ENCODE measurements at regions of chr10 and their contacts with region 1.

Region 1: DNA sequence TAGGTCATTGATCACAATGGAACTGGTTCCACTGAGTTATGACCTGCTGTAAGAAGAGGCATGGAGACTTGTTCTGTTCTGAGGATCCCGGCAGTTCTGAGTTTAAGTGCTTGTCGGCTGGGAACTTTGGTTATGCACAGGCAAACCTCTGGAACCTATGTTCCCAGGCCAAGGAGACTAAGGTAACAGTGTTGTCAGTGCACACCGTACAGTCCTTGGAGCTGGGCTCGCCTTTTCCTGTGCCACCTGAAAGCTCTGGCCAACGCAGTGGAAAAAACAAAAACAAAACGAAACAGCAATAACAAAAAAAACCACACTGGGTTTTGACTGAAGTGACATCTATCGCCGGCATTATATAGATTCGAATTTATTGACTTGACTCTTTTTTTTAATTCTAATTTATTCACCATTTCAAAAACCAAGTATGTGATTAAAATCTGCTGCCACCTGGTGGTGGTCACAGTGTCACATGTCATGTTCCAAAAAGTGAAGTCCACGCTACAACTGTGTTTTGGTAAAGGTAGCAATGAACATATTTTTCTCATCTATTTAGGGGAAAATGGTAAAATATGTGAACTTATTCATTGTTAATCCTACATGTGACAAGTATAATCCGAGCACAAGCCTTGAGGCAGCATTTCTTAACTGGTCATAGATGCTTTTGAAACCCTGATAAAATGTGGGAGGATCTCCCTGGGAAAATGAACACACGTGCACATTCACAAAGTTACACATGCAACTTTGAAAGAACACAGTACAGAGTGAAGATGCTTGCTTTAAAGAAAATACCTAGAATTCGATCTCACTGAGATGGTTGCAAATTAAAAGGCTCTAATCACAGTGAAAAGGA is 113.8 kb upstream of the PPP2R2D start:
- DNase-seq: peak; percentile 31
- H3K4me3 ChIP-seq: no peak overlapping the region
- H3K27ac ChIP-seq: no peak overlapping the region
- H3K4me1 ChIP-seq: no peaks in the 10 kb centered on the region
- H3K27me3 ChIP-seq: no peaks in the 10 kb centered on the region
- CTCF ChIP-seq: peak; percentile 62

Region 2: DNA sequence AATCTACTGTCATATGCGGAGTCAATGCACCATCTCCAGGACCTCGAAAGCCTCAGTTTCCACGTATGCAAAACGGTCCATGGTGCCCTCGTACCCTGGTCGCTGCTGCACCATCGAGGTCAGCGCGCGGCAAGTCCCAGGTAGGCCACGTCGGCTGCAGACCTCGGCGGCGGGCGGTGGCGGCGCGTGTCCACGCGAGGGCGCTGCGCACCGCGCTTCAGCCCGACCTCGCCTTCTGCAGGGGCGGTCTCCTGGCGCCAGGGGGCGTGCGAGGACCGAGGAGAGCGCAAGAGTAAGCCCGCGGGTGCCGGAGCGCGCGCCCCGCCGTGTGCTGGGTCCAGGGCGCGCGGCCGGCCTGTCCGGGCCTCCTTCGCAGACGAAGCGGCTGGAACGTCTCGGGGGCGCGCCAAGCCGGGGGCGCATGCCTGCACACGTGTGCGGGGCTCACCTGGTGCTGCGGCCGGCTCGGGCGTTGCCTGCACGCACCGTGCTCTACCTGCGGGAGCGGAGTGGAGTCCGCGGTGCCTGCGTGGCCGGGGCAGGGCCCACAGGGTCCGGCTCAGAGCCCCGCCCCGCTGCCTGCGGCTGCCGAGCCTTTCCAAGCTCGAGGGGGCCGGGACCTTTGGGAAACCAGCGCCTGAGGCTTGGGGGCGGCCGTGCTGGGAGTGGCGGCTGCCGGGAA is 1596.8 kb before region 1 on chr10:
- intact Hi-C with region 1: loop called (anchors 5 kb)
- DNase-seq: peak; percentile 92
- H3K4me3 ChIP-seq: peak overlapping the region; percentile 63
- H3K27ac ChIP-seq: no peak overlapping the region
- H3K4me1 ChIP-seq: no peaks in the 10 kb centered on the region
- H3K27me3 ChIP-seq: no peaks in the 10 kb centered on the region
- CTCF ChIP-seq: peak; percentile 100

Region 3: GRCh38 chr10:131453594-131454355 is 333.2 kb before region 1 on chr10:
- intact Hi-C with region 1: loop called (anchors 5 kb)
- DNase-seq: peak; percentile 68
- H3K4me3 ChIP-seq: no peak overlapping the region
- H3K27ac ChIP-seq: no peak overlapping the region
- H3K4me1 ChIP-seq: no peaks in the 10 kb centered on the region
- H3K27me3 ChIP-seq: no peaks in the 10 kb centered on the region
- CTCF ChIP-seq: peak; percentile 81

Region 4: GRCh38 chr10:131496351-131497052 is 290.5 kb before region 1 on chr10:
- intact Hi-C with region 1: no loop called
- DNase-seq: no peak
- H3K4me3 ChIP-seq: no peak overlapping the region
- H3K27ac ChIP-seq: no peak overlapping the region
- H3K4me1 ChIP-seq: no peaks in the 10 kb centered on the region
- H3K27me3 ChIP-seq: no peaks in the 10 kb centered on the region
- CTCF ChIP-seq: no peak

Measured in colonic mucosa (tissue), 4 donors.